ENCODE measurements at regions of chr7 and their contacts with region 1.

Region 1: GRCh38 chr7:101085162-101085987 is at the start of gene TRIM56:
- DNase-seq: peak; percentile 98 to 99
- H3K4me3 ChIP-seq: peak within 1 kb of the TSS; percentile 88
- H3K27ac ChIP-seq: peak within 1 kb of the TSS; percentile 88
- H3K4me1 ChIP-seq: peaks cover 39% of the 10 kb centered on the region
- H3K27me3 ChIP-seq: no peaks in the 10 kb centered on the region
- CTCF ChIP-seq: no peak
- total RNA-seq, gene TRIM56: 72.3 and 81.6 TPM in 2 replicates

Region 2: DNA sequence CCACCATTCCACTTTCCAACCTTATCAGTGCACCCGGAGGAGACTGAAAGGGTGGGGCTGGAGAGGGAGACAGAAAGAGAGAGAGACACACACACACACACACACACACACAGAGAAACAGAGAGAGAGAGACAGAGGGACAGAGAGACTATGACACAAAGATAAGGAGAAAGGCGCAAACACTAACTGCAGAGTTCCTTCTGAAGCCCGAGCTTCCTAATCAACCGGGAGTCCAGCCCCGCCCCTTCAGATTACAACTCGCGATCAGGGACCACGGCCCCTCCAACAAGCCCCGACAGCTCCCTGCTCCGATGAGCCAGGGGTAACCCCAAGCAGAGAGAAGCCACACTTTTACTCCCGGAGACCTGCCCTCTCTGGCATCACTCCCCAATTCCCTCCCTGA is 917.5 kb before region 1 on chr7:
- CTCF ChIA-PET with region 1: interaction called, 16 read pairs
- POLR2A ChIA-PET with region 1: no interaction called
- intact Hi-C with region 1: no loop called
- DNase-seq: no peak
- H3K4me3 ChIP-seq: no peak overlapping the region
- H3K27ac ChIP-seq: no peak overlapping the region
- H3K4me1 ChIP-seq: peaks cover 10% of the 10 kb centered on the region
- H3K27me3 ChIP-seq: peaks cover 47% of the 10 kb centered on the region
- CTCF ChIP-seq: no peak

Region 3: GRCh38 chr7:100449190-100449795 is 636.1 kb before region 1 on chr7:
- CTCF ChIA-PET with region 1: no interaction called
- POLR2A ChIA-PET with region 1: no interaction called
- intact Hi-C with region 1: no loop called
- DNase-seq: no peak
- H3K4me3 ChIP-seq: no peak overlapping the region
- H3K27ac ChIP-seq: no peak overlapping the region
- H3K4me1 ChIP-seq: peaks cover 10% of the 10 kb centered on the region
- H3K27me3 ChIP-seq: no peaks in the 10 kb centered on the region
- CTCF ChIP-seq: no peak

Region 4: GRCh38 chr7:101099969-101100781 is 14.8 kb after region 1 on chr7:
- CTCF ChIA-PET with region 1: interaction called, 6 read pairs
- POLR2A ChIA-PET with region 1: interaction called, 16 read pairs
- intact Hi-C with region 1: loop called (anchors 1 kb)
- DNase-seq: peak; percentile 95 to 98
- H3K4me3 ChIP-seq: peak overlapping the region; percentile 43; the same call in 1 of the 2 replicates
- H3K27ac ChIP-seq: peak overlapping the region; percentile 93
- H3K4me1 ChIP-seq: peaks cover 53% of the 10 kb centered on the region
- H3K27me3 ChIP-seq: no peaks in the 10 kb centered on the region
- CTCF ChIP-seq: no peak

Region 5: DNA sequence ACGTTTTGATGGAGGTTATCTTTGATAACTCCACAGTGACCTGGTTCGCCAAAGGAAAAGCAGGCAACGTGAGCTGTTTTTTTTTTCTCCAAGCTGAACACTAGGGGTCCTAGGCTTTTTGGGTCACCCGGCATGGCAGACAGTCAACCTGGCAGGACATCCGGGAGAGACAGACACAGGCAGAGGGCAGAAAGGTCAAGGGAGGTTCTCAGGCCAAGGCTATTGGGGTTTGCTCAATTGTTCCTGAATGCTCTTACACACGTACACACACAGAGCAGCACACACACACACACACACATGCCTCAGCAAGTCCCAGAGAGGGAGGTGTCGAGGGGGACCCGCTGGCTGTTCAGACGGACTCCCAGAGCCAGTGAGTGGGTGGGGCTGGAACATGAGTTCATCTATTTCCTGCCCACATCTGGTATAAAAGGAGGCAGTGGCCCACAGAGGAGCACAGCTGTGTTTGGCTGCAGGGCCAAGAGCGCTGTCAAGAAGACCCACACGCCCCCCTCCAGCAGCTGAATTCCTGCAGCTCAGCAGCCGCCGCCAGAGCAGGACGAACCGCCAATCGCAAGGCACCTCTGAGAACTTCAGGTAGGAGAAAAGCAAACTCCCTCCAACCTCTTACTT is 41.4 kb after region 1 on chr7 and contains the start of gene SERPINE1:
- CTCF ChIA-PET with region 1: interaction called, 3 read pairs
- POLR2A ChIA-PET with region 1: interaction called, 23 read pairs
- intact Hi-C with region 1: loop called (anchors 1 kb)
- DNase-seq: peak; percentile 51 to 92
- H3K4me3 ChIP-seq: peak within 1 kb of the TSS; percentile 45; the same call in 1 of the 2 replicates
- H3K27ac ChIP-seq: peak within 1 kb of the TSS; percentile 99
- H3K4me1 ChIP-seq: peaks cover 72% of the 10 kb centered on the region
- H3K27me3 ChIP-seq: no peaks in the 10 kb centered on the region
- CTCF ChIP-seq: peak; percentile 15; the same call in 1 of the 2 replicates
- total RNA-seq, gene SERPINE1: 36.2 and 45.8 TPM in 2 replicates

Region 6: DNA sequence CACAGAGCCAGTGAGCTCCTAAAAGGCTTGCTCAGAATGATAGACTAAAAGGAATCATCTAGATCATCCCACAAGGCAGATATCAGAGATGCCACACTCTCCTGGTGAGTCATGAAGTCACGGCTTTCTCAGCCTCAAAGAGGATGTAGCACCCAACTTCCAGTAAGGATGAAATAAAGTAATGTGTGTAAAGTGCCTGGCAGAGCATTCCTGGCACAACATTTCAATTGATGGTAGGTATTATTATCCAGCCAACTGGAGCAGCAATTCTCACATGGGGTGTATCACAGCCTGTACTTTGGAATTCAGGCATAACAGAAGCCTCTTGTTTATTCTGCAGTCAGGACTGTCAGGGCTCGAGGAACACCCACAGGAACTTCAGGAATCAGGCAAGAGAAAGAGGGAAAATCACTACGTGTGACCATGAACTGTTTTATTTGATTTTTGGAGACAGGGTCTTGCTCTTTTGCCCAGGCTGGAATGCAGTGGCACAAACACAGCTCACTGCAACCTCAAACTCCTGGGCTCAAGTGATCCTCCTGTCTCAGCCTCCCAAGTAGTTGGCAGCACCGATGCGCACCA is 100.0 kb after region 1 on chr7:
- CTCF ChIA-PET with region 1: interaction called, 10 read pairs
- POLR2A ChIA-PET with region 1: interaction called, 8 read pairs
- intact Hi-C with region 1: no loop called
- DNase-seq: no peak
- H3K4me3 ChIP-seq: no peak overlapping the region
- H3K27ac ChIP-seq: no peak overlapping the region
- H3K4me1 ChIP-seq: no peaks in the 10 kb centered on the region
- H3K27me3 ChIP-seq: no peaks in the 10 kb centered on the region
- CTCF ChIP-seq: no peak